ENCODE measurements at regions of chr1 and their contacts with region 1.

Region 1: DNA sequence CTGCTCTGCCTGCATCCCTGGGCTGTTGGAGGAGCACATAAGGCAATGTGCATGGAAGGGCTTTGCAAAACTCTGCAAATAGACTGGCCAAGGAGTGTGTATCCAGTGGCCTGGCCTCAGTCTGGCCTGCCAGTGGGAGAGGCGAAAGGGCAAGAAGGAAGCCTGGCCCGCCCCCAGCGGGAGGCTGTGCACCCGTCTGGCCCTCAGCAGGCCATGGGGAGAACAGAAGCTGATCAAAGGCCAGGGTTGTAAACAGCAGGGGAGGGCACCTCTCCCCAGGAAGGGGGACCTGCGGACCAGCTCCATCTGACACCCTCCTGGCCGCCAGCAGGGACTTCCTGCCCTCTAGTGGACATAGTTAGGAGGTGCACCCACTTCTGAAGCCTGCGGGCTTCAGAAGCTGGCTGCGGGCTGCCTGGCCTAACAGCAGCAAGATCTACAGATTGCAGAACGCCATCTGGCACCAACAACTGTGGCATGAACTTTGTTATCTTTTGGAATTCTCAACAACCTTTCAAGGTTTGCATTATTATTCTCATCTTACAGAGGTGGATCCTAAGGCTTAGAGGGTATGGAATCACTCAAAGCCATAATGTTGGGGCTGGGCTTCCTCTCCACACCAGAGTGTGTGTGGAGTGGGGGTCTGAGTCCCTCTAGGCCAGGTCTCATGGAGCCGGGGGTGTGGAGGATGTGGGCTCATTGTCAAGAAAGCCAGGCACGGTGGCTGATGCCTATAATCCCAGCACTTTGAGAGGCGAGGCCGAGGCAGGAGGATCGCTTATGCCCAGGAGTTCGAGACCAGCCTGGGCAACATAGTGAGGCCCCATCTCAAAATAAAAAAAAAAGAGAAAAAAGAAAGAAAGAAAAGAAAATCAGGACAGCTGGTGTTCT is 18.9 kb upstream of the CDK18 start:
- DNase-seq: peak; percentile 91
- CTCF ChIP-seq: peak; percentile 81

Region 2: GRCh38 chr1:205354259-205354904 is 131.2 kb before region 1 on chr1:
- in situ Hi-C with region 1: loop called (anchors 10 kb)
- DNase-seq: peak; percentile 72
- CTCF ChIP-seq: peak; percentile 71

Region 3: DNA sequence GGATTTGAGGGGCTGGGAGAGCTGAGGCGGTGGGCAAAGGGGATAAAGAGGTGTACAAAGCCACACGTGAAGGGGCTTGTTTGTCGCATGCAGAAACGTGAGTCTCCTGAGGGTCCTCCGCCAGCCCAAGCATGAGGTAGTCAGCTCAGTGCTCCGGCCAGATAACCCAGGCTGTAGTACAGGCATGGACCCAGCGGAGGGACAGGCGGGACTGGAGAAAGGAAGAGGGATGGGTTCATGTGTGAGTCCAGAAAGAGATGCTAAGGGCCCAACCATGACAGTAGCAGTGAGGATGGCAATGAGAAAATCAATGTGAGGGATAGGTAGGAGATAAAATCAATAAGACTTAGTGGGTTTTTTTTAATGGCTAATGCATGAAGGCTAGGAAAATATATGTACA is 159.9 kb after region 1 on chr1:
- in situ Hi-C with region 1: no loop called
- DNase-seq: no peak
- CTCF ChIP-seq: no peak